Left lung (tissue), 14 donors: ENCODE measurements at regions of chr10 and their contacts with region 1.

Region 1: GRCh38 chr10:80493522-80494051 is 39.5 kb downstream of the TSPAN14 start:
- DNase-seq: no peak
- ATAC-seq: no peak
- H3K4me3 ChIP-seq: no peak overlapping the region
- H3K27ac ChIP-seq: peak overlapping the region; percentile 40 to 90
- H3K4me1 ChIP-seq: peaks cover 44 to 100% of the 10 kb centered on the region in 2 donors
- H3K27me3 ChIP-seq: no peaks in the 10 kb centered on the region
- CTCF ChIP-seq: no peak

Region 2: GRCh38 chr10:80333983-80334382 is 159.6 kb before region 1 on chr10:
- intact Hi-C with region 1: no loop called
- DNase-seq: no peak
- ATAC-seq: no peak
- H3K4me3 ChIP-seq: no peak overlapping the region
- H3K27ac ChIP-seq: no peak overlapping the region
- H3K4me1 ChIP-seq: no peaks in the 10 kb centered on the region
- H3K27me3 ChIP-seq: peaks cover 0 to 6% of the 10 kb centered on the region in 2 donors
- CTCF ChIP-seq: no peak

Region 3: GRCh38 chr10:80459047-80459931 is 34.3 kb before region 1 on chr10:
- intact Hi-C with region 1: loop called in 1 of 2 experiments (anchors 5 kb)
- DNase-seq: peak in 3 of 4 donors; percentile 40 to 90 (median 88)
- ATAC-seq: peak; percentile 61
- H3K4me3 ChIP-seq: peak overlapping the region in 1 of 2 donors; percentile 95
- H3K27ac ChIP-seq: peak overlapping the region; percentile 77 to 98
- H3K4me1 ChIP-seq: peaks cover 81 to 91% of the 10 kb centered on the region in 2 donors
- H3K27me3 ChIP-seq: no peaks in the 10 kb centered on the region
- CTCF ChIP-seq: no peak

Region 4: DNA sequence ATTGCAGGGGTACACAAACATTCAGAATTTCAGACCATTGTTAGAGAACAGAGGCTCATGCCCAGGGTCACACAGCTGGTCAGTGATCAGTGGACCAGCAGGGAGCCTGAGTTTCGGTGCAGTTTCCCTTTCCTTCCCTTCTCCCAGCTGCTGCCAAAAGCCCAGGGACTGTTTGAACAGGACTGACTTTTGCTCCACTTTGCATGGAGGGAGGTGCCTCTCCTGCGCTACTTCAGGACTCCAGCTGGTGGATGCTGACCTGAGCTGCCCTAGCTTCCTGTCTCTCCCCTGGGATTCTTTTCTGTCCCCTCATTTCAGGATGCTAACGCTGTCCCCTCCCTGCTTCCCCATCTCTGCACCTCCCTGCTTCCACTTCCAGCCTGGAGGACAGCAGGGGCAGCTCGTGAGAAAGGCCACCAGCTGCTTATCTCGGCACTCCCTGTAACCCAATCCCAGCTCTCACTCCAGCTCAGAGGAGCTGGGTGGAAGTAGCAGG is 58.6 kb after region 1 on chr10:
- intact Hi-C with region 1: no loop called
- DNase-seq: peak in 1 of 4 donors; percentile 39
- ATAC-seq: peak; percentile 87
- H3K4me3 ChIP-seq: no peak overlapping the region
- H3K27ac ChIP-seq: no peak overlapping the region
- H3K4me1 ChIP-seq: no peaks in the 10 kb centered on the region
- H3K27me3 ChIP-seq: no peaks in the 10 kb centered on the region
- CTCF ChIP-seq: no peak

Region 5: GRCh38 chr10:81018708-81019365 is 525.2 kb after region 1 on chr10:
- intact Hi-C with region 1: no loop called
- DNase-seq: peak in 2 of 4 donors; percentile 34 to 57
- ATAC-seq: peak; percentile 83
- H3K4me3 ChIP-seq: no peak overlapping the region
- H3K27ac ChIP-seq: no peak overlapping the region
- H3K4me1 ChIP-seq: no peaks in the 10 kb centered on the region
- H3K27me3 ChIP-seq: no peaks in the 10 kb centered on the region
- CTCF ChIP-seq: peak; percentile 45 to 52